K562 (cell line): ENCODE measurements at regions of chr6 and their contacts with region 1.

Region 1: GRCh38 chr6:2931970-2932748 is 29.1 kb upstream of the SERPINB9 start:
- DNase-seq: peak; percentile 94 to 97 (median 94)
- ATAC-seq: peak; percentile 99
- H3K4me3 ChIP-seq: no peak overlapping the region
- H3K27ac ChIP-seq: 0 out of 3 replicates have a peak overlapping the region, but pooled peaks have one; percentile 2
- H3K4me1 ChIP-seq: peaks cover 9 to 13% of the 10 kb centered on the region in 2 experiments; a peak in 4 of 5 replicates
- H3K27me3 ChIP-seq: no peaks in the 10 kb centered on the region
- CTCF ChIP-seq: peak; percentile 98 to 100 (median 99)
- EP300 ChIP-seq: peak; percentile 97
- POLR2A ChIP-seq: no peak
- RAD21 ChIP-seq: peak; percentile 98

Region 2: GRCh38 chr6:2432239-2432638 is 499.9 kb before region 1 on chr6:
- CTCF ChIA-PET with region 1: no interaction called
- POLR2A ChIA-PET with region 1: no interaction called
- in situ Hi-C with region 1: no loop called
- intact Hi-C with region 1: no loop called
- DNase-seq: no peak
- ATAC-seq: no peak
- H3K4me3 ChIP-seq: no peak overlapping the region
- H3K27ac ChIP-seq: no peak overlapping the region
- H3K4me1 ChIP-seq: no peaks in the 10 kb centered on the region
- H3K27me3 ChIP-seq: peaks cover 34 to 45% of the 10 kb centered on the region in 2 experiments
- CTCF ChIP-seq: no peak
- EP300 ChIP-seq: no peak
- POLR2A ChIP-seq: no peak
- RAD21 ChIP-seq: no peak

Region 3: DNA sequence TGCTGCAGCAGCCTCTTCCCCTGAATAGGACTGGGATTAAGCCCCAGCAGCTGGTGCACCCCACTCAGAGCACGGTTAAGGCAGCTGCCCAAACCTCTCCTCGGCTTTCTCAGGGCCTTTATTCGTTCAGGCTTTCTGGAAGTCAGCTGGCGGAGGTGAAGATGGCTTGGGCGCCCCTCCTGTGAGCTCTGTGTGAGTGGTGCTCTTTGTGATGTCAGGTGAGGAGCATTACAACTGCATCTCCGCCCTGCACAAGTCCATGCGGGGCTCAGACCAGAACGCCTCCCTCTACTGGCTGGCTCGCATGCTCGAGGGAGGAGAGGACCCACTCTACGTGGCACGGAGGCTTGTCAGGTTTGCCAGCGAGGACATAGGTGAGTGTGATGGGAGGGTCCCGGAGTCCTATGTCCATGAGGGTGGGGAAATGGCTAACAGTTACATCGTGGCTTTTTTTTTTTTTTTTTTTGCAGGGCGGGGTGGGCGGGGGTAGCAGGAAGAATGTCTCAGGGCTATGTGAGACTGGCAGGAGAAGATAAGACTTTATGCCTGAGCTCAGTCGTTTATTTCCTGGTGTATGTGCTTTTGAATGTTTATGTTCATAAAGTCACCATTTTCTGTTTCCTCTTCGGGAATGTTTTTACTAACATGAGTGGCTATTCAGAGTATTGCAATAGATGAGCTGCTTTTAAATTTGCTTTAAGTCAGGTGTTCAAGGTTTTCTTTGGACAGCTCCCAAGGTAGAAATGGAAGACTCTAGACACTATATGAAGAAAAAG is 148.8 kb before region 1 on chr6:
- CTCF ChIA-PET with region 1: interaction called, 3 read pairs
- POLR2A ChIA-PET with region 1: no interaction called
- in situ Hi-C with region 1: loop called (anchors 5 kb)
- intact Hi-C with region 1: no loop called
- DNase-seq: peak; percentile 63 to 82 (median 74)
- ATAC-seq: peak; percentile 92
- H3K4me3 ChIP-seq: peak overlapping the region; percentile 21; the same call in 1 of the 2 replicates
- H3K27ac ChIP-seq: peak overlapping the region; percentile 61
- H3K4me1 ChIP-seq: peaks cover 19 to 20% of the 10 kb centered on the region in 2 experiments
- H3K27me3 ChIP-seq: no peaks in the 10 kb centered on the region
- CTCF ChIP-seq: peak; percentile 39 to 64 (median 49)
- EP300 ChIP-seq: peak; percentile 36; the same call in 1 of the 2 replicates
- POLR2A ChIP-seq: no peak; the same call in 1 of the 2 replicates
- RAD21 ChIP-seq: 0 out of 4 replicates have a peak, but pooled peaks of 1 of the 2 experiments have one; percentile 32

Region 4: GRCh38 chr6:2791124-2791974 is 140.8 kb before region 1 on chr6:
- CTCF ChIA-PET with region 1: interaction called, 19 read pairs
- POLR2A ChIA-PET with region 1: interaction called, 3 read pairs
- in situ Hi-C with region 1: loop called (anchors 5 kb)
- intact Hi-C with region 1: loop called (anchors 1 kb)
- DNase-seq: peak; percentile 74 to 88 (median 81)
- ATAC-seq: peak; percentile 97
- H3K4me3 ChIP-seq: no peak overlapping the region
- H3K27ac ChIP-seq: no peak overlapping the region
- H3K4me1 ChIP-seq: peaks cover 2 to 3% of the 10 kb centered on the region in 2 experiments; a peak in 3 of 5 replicates
- H3K27me3 ChIP-seq: no peaks in the 10 kb centered on the region
- CTCF ChIP-seq: peak; percentile 89 to 98 (median 97)
- EP300 ChIP-seq: no peak
- POLR2A ChIP-seq: no peak
- RAD21 ChIP-seq: peak; percentile 97 to 99

Region 5: DNA sequence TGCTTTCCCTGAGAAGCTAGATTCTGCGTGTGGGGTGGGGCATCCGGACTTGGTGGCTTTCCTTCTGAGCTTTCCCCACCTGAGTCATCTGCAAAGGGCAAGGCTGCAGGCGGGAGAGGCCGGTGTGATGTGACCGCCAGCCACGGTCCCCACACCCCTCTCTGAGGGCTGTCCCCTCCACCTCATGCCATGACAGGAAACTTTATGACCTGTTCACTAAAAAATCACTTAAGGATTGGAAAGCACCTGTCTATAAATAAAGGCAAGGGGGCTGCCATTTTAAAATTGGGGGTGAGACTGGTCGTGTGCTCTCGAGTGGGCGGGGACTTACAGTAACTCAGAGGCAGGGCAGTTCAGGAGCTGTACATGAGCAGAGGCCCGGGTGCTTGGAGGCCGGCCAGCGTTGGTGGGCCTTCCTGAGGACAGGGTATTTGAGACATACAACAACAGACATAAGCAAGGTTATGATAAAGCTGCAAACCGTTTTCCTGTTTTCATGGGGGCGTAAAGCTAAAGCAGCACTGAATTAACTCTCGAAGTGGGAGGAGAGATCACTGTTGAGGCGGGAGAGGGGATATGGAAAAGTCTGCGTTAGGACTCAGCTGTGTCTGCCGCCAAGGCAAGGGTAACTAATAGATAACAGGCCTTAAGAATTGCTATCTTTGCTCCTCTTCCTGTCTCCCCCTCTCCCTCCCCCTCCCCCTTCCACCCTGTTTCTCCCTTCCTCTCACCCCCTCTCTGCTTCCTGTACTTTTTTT is 74.4 kb before region 1 on chr6:
- CTCF ChIA-PET with region 1: no interaction called
- POLR2A ChIA-PET with region 1: interaction called, 6 read pairs
- in situ Hi-C with region 1: loop called (anchors 5 kb)
- intact Hi-C with region 1: no loop called
- DNase-seq: peak; percentile 79 to 96 (median 86)
- ATAC-seq: peak; percentile 86
- H3K4me3 ChIP-seq: peak overlapping the region; percentile 22
- H3K27ac ChIP-seq: peak overlapping the region; percentile 98
- H3K4me1 ChIP-seq: peaks cover 48 to 67% of the 10 kb centered on the region in 2 experiments
- H3K27me3 ChIP-seq: no peaks in the 10 kb centered on the region
- CTCF ChIP-seq: 0 out of 6 replicates have a peak, but pooled peaks of 1 of the 3 experiments have one; percentile 8
- EP300 ChIP-seq: peak; percentile 87
- POLR2A ChIP-seq: peak; percentile 78
- RAD21 ChIP-seq: no peak; a peak in 1 of 4 replicates